Caco-2 (cell line): ENCODE measurements at regions of chr13 and their contacts with region 1.

Region 1: GRCh38 chr13:64764007-64764406 is 2466.1 kb downstream of the PCDH9 start:
- DNase-seq: peak in 1 of 2 experiments; percentile 5
- H3K4me3 ChIP-seq: no peak overlapping the region
- H3K4me3 Mint-ChIP-seq: no peak overlapping the region
- H3K27ac Mint-ChIP-seq: no peak overlapping the region
- H3K4me1 ChIP-seq: no peaks in the 10 kb centered on the region
- H3K4me1 Mint-ChIP-seq: peaks cover 10% of the 10 kb centered on the region
- H3K27me3 ChIP-seq: no peaks in the 10 kb centered on the region
- H3K27me3 Mint-ChIP-seq: no peaks in the 10 kb centered on the region
- CTCF ChIP-seq: no peak

Region 2: GRCh38 chr13:62997038-62997599 is 1766.9 kb before region 1 on chr13:
- CTCF ChIA-PET with region 1: no interaction called
- POLR2A ChIA-PET with region 1: no interaction called
- intact Hi-C with region 1: loop called (anchors 5 kb)
- DNase-seq: no peak
- H3K4me3 ChIP-seq: no peak overlapping the region
- H3K4me3 Mint-ChIP-seq: no peak overlapping the region
- H3K27ac Mint-ChIP-seq: no peak overlapping the region
- H3K4me1 ChIP-seq: no peaks in the 10 kb centered on the region
- H3K4me1 Mint-ChIP-seq: no peaks in the 10 kb centered on the region
- H3K27me3 ChIP-seq: no peaks in the 10 kb centered on the region
- H3K27me3 Mint-ChIP-seq: peaks cover 3% of the 10 kb centered on the region
- CTCF ChIP-seq: no peak

Region 3: DNA sequence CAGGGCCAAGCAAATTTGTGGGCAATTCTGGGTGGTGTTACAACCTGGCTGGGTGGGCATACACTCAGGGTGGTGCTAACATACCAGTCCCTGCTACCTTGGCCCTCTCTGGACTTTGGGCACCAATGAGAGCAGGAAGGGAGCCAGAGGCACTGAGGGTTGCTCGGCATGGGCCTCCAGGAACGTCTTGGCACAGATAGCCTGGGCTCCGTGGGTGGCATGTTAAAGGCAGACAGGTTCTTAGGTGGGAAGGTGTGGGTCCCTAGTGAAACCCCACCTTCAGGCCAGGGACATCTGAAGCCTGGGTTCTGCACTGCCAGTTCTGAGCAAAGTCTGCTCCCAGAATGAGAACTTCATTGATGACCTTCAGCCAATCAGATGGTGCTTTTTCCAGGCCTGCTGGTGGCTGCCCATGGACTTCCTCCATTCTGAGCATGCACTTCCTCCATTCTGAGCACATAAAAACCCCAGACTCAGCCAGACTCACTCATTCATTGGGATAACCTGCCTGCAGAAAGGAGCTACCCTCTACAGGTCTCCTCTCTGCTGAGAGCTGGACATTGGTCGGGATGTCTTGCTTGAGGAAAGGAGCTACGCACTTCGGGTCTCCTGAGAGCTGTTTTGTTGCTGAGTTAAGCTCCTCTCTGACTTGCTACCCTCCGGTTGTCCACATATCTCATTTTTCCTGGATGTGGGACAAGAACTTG is 101.0 kb before region 1 on chr13:
- CTCF ChIA-PET with region 1: no interaction called
- POLR2A ChIA-PET with region 1: no interaction called
- intact Hi-C with region 1: no loop called
- DNase-seq: no peak
- H3K4me3 ChIP-seq: no peak overlapping the region
- H3K4me3 Mint-ChIP-seq: no peak overlapping the region
- H3K27ac Mint-ChIP-seq: no peak overlapping the region
- H3K4me1 ChIP-seq: no peaks in the 10 kb centered on the region
- H3K4me1 Mint-ChIP-seq: no peaks in the 10 kb centered on the region
- H3K27me3 ChIP-seq: no peaks in the 10 kb centered on the region
- H3K27me3 Mint-ChIP-seq: no peaks in the 10 kb centered on the region
- CTCF ChIP-seq: no peak